Naive thymus-derived CD4-positive, alpha-beta T cell (primary cell): ENCODE measurements at regions of chr17 and their contacts with region 1.

Region 1: GRCh38 chr17:5055543-5055942 is 20.3 kb upstream of the SLC52A1 start:
- DNase-seq: no peak
- ATAC-seq: no peak
- H3K4me3 ChIP-seq: no peak overlapping the region
- H3K4me3 Mint-ChIP-seq: no peak overlapping the region
- H3K27ac ChIP-seq: no peak overlapping the region
- H3K27ac Mint-ChIP-seq: peak overlapping the region in 1 of 9 donors; percentile 20
- H3K4me1 ChIP-seq: peaks cover 0 to 4% of the 10 kb centered on the region in 2 donors
- H3K4me1 Mint-ChIP-seq: peaks cover 0 to 1% (median 0%) of the 10 kb centered on the region in 7 donors
- H3K27me3 ChIP-seq: no peaks in the 10 kb centered on the region
- H3K27me3 Mint-ChIP-seq: no peaks in the 10 kb centered on the region

Region 2: GRCh38 chr17:4208238-4208637 is 847.3 kb before region 1 on chr17:
- CTCF ChIA-PET with region 1: no interaction called
- POLR2A ChIA-PET with region 1: no interaction called
- intact Hi-C with region 1: no loop called
- DNase-seq: no peak
- ATAC-seq: no peak
- H3K4me3 ChIP-seq: no peak overlapping the region
- H3K4me3 Mint-ChIP-seq: no peak overlapping the region
- H3K27ac ChIP-seq: no peak overlapping the region
- H3K27ac Mint-ChIP-seq: peak overlapping the region in 2 of 9 donors; percentile 36 to 40
- H3K4me1 ChIP-seq: no peaks in the 10 kb centered on the region
- H3K4me1 Mint-ChIP-seq: peaks cover 3 to 18% (median 7%) of the 10 kb centered on the region in 7 donors
- H3K27me3 ChIP-seq: no peaks in the 10 kb centered on the region
- H3K27me3 Mint-ChIP-seq: no peaks in the 10 kb centered on the region

Region 3: DNA sequence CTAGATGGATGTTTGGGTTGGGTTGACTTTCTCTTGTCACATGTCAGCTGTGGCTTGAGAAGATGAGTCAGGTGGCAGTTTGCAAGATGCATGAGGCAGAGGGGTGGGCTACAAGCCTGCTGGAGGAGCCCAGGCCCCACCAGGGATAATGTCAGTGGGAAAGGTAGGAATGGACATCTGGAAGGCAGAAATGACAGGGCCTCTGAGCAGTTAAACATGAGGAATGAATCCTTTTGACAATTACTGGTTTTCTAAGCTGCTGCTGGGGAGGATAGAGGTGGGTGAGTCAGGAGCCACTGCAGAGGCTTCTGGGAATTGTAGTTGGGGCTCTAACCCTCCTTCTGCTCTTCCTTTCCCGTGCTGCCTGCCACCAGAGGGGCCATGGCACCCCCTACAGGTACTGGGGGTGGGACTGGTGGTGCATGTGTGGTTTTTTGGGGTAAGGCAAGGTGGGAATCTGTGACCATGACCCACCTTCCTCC is 36.0 kb before region 1 on chr17:
- CTCF ChIA-PET with region 1: interaction called, 3 read pairs
- POLR2A ChIA-PET with region 1: no interaction called
- intact Hi-C with region 1: loop called in 1 of 2 experiments (anchors 5 kb)
- DNase-seq: peak in 5 of 9 donors; percentile 22 to 42 (median 39)
- ATAC-seq: peak; percentile 73
- H3K4me3 ChIP-seq: no peak overlapping the region
- H3K4me3 Mint-ChIP-seq: no peak overlapping the region
- H3K27ac ChIP-seq: no peak overlapping the region
- H3K27ac Mint-ChIP-seq: peak overlapping the region in 6 of 9 donors; percentile 49 to 78 (median 73)
- H3K4me1 ChIP-seq: no peaks in the 10 kb centered on the region
- H3K4me1 Mint-ChIP-seq: peaks cover 4 to 15% (median 7%) of the 10 kb centered on the region in 7 donors
- H3K27me3 ChIP-seq: no peaks in the 10 kb centered on the region
- H3K27me3 Mint-ChIP-seq: no peaks in the 10 kb centered on the region